SK-N-SH (cell line): ENCODE measurements at regions of chr11 and their contacts with region 1.

Region 1: DNA sequence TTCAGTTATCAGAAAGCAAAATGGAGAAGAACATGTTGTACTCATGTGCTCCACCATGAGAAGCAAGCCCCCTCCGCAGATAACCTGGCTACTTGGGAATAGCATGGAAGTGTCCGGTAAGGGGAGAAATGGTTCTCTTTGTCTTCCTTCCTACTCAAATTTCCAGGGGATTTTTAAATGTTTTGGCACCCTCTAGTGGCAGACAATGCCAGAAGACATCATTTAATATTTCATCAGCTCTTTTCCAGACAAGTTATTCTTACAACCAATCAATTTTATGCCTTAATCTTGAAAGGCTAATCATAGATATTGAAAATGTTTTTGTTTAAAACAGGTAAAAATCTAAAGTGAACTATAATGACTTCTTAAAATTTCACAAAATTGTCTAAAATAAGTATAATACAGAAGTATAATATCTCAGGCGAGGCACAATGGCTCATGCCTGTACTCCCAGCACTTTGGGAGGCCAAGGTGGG is 15.7 kb downstream of the CRTAM start:
- DNase-seq: peak; percentile 76
- H3K4me3 ChIP-seq: no peak overlapping the region; a peak in 1 of 4 replicates
- H3K27ac ChIP-seq: peak overlapping the region in 1 of 2 experiments; percentile 21; a peak in 1 of 4 replicates
- H3K4me1 ChIP-seq: peaks cover 0 to 26% of the 10 kb centered on the region in 2 experiments; a peak in 2 of 4 replicates
- H3K27me3 ChIP-seq: no peaks in the 10 kb centered on the region
- CTCF ChIP-seq: peak; percentile 85
- EP300 ChIP-seq: no peak
- RAD21 ChIP-seq: peak; percentile 90

Region 2: DNA sequence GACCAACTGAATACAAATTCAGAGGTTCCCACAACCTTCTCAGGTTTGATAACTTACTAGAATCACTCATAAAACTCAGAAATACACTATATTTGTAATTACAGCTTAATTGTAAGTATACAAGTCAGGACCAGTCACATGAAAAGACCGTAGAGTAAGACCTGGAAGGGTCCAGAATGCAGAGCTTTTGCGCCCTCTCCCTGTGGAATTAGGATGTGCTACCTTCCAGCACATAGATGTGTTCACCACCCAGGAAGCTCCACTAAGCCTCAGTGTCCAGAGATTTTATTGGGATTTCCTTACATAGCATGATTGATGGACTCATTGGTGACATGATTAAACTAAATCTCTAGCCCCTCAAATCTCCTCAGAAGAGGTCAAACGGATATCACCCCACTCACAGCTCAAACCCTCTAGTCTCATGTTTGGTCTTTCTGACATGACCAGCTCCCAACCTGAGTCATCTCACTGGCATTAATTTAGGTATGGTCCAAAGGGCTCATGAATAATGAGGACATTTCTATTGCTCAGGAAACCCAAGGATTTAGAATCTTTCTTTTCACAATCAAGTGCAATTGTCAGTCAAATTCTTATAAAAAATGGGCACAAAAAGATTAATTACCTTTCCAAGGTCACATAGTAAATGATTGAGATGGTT is 275.7 kb before region 1 on chr11:
- CTCF ChIA-PET with region 1: interaction called, 33 read pairs
- POLR2A ChIA-PET with region 1: no interaction called
- DNase-seq: no peak
- H3K4me3 ChIP-seq: no peak overlapping the region
- H3K27ac ChIP-seq: no peak overlapping the region
- H3K4me1 ChIP-seq: peaks cover 0 to 2% of the 10 kb centered on the region in 2 experiments; a peak in 1 of 4 replicates
- H3K27me3 ChIP-seq: no peaks in the 10 kb centered on the region
- CTCF ChIP-seq: peak; percentile 36
- EP300 ChIP-seq: no peak
- RAD21 ChIP-seq: peak; percentile 34

Region 3: GRCh38 chr11:122781378-122782195 is 72.4 kb before region 1 on chr11:
- CTCF ChIA-PET with region 1: interaction called, 37 read pairs
- POLR2A ChIA-PET with region 1: no interaction called
- DNase-seq: peak; percentile 84
- H3K4me3 ChIP-seq: no peak overlapping the region; a peak in 1 of 4 replicates
- H3K27ac ChIP-seq: peak overlapping the region in 1 of 2 experiments; percentile 25; a peak in 1 of 4 replicates
- H3K4me1 ChIP-seq: peaks cover 12 to 30% of the 10 kb centered on the region in 2 experiments; a peak in 3 of 4 replicates
- H3K27me3 ChIP-seq: no peaks in the 10 kb centered on the region
- CTCF ChIP-seq: peak; percentile 94
- EP300 ChIP-seq: no peak
- RAD21 ChIP-seq: peak; percentile 96

Region 4: GRCh38 chr11:122796128-122796717 is 57.8 kb before region 1 on chr11:
- CTCF ChIA-PET with region 1: interaction called, 56 read pairs
- POLR2A ChIA-PET with region 1: no interaction called
- DNase-seq: peak; percentile 43
- H3K4me3 ChIP-seq: no peak overlapping the region
- H3K27ac ChIP-seq: no peak overlapping the region
- H3K4me1 ChIP-seq: peaks cover 0 to 8% of the 10 kb centered on the region in 2 experiments; a peak in 2 of 4 replicates
- H3K27me3 ChIP-seq: no peaks in the 10 kb centered on the region
- CTCF ChIP-seq: peak; percentile 81
- EP300 ChIP-seq: no peak
- RAD21 ChIP-seq: peak; percentile 63

Region 5: GRCh38 chr11:122837528-122838346 is 16.3 kb before region 1 on chr11:
- CTCF ChIA-PET with region 1: interaction called, 18 read pairs
- POLR2A ChIA-PET with region 1: no interaction called
- DNase-seq: no peak
- H3K4me3 ChIP-seq: no peak overlapping the region
- H3K27ac ChIP-seq: no peak overlapping the region
- H3K4me1 ChIP-seq: no peaks in the 10 kb centered on the region; a peak in 1 of 4 replicates
- H3K27me3 ChIP-seq: no peaks in the 10 kb centered on the region; the same call in 1 of the 2 replicates
- CTCF ChIP-seq: no peak
- EP300 ChIP-seq: no peak
- RAD21 ChIP-seq: no peak

Region 6: DNA sequence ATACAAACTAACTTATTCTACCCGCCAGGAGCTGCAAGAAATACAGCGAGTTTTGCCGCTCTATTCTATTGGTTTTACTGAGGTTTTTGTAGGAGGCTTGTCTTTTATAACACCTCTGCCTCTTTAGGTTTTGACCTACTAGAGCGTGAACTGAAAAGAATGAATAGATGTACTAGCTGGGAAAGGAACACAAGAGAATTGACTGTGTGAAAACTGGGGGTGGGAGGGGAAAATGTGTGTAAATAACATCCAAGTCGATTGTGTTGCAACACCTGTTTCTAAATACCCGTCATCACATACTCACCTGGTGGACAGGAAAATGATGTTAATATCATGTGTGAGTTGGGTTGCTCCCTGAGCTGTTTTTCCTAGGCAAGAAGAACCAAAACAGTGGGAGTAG is 15.6 kb after region 1 on chr11:
- CTCF ChIA-PET with region 1: interaction called, 101 read pairs
- POLR2A ChIA-PET with region 1: no interaction called
- DNase-seq: no peak
- H3K4me3 ChIP-seq: no peak overlapping the region
- H3K27ac ChIP-seq: no peak overlapping the region
- H3K4me1 ChIP-seq: peaks cover 0 to 2% of the 10 kb centered on the region in 2 experiments; a peak in 1 of 4 replicates
- H3K27me3 ChIP-seq: no peaks in the 10 kb centered on the region
- CTCF ChIP-seq: no peak
- EP300 ChIP-seq: no peak
- RAD21 ChIP-seq: no peak

Region 7: DNA sequence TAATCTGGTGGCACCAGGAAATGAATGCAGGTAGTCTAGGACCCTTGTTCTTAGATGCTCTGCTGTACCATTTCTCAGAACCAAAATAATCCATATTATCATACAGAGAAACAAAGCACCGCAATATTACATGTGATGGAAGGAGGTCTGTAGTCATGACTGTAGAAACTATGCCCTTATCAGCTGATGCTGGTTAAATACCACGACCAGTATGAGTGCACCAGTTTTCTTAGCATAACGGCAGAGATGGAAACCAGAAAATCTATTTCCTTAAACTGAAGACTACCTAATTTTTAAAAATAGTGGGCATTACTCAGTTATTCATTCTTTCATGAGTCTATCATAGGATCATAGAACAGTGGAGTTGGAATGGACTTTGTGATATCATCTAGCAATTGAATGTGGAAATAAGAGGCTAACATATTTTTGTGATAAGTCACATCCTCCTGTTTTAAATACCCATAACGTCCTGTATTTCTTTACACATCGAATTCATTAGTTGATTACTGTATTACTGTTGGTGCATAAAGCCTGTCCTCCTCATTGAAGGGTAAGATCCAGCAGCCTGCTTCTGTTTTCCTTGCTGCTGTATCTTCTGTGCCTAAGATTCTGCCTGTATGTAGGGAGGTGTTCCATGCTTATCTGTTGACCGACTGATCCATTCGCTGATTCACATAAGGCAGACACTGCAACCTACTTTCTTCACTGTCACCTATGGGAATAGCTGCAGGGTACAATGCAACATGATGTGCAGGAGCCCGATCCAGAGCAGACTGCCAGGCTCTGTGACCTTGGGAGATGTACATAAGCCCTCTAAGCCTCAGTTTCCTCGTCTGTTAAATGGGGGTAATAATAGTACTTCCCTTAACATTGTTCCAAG is 43.8 kb after region 1 on chr11:
- CTCF ChIA-PET with region 1: no interaction called
- POLR2A ChIA-PET with region 1: no interaction called
- DNase-seq: no peak
- H3K4me3 ChIP-seq: no peak overlapping the region
- H3K27ac ChIP-seq: peak overlapping the region in 1 of 2 experiments; percentile 36; a peak in 2 of 4 replicates
- H3K4me1 ChIP-seq: no peaks in the 10 kb centered on the region; a peak in 1 of 4 replicates
- H3K27me3 ChIP-seq: no peaks in the 10 kb centered on the region
- CTCF ChIP-seq: no peak
- EP300 ChIP-seq: 0 out of 4 replicates have a peak, but pooled peaks of 1 of the 2 experiments have one; percentile 16
- RAD21 ChIP-seq: no peak

Region 8: GRCh38 chr11:123033895-123034294 is 179.9 kb after region 1 on chr11:
- CTCF ChIA-PET with region 1: interaction called, 409 read pairs
- POLR2A ChIA-PET with region 1: no interaction called
- DNase-seq: no peak
- H3K4me3 ChIP-seq: no peak overlapping the region
- H3K27ac ChIP-seq: no peak overlapping the region
- H3K4me1 ChIP-seq: no peaks in the 10 kb centered on the region
- H3K27me3 ChIP-seq: no peaks in the 10 kb centered on the region
- CTCF ChIP-seq: no peak
- EP300 ChIP-seq: no peak
- RAD21 ChIP-seq: no peak

Region 9: DNA sequence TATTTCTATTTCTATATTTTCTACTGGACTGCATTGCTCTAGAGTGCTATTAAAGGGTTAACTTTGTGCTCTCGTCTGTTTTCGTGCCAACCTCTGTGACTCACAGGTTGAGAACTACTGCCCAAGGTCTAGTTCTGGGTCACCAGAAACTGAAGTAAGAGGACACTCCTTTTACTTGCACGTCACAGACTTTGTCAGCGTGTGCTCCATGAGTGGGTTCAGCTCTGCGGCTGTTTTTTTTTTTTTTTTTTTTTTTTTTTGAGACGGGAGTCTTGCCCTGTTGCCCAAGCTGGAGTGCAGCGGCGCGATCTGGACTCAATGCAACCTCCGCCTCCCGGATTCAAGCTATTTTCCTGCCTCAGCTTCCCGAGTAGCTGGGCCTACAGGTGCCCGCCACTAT is 291.2 kb after region 1 on chr11:
- CTCF ChIA-PET with region 1: no interaction called
- POLR2A ChIA-PET with region 1: no interaction called
- DNase-seq: peak; percentile 66
- H3K4me3 ChIP-seq: peak overlapping the region; percentile 21 to 49; a peak in 3 of 4 replicates
- H3K27ac ChIP-seq: peak overlapping the region; percentile 87 to 95
- H3K4me1 ChIP-seq: peaks cover 9 to 17% of the 10 kb centered on the region in 2 experiments
- H3K27me3 ChIP-seq: no peaks in the 10 kb centered on the region
- CTCF ChIP-seq: no peak
- EP300 ChIP-seq: peak in 1 of 2 experiments; percentile 29; a peak in 1 of 4 replicates
- RAD21 ChIP-seq: no peak